ENCODE measurements at regions of chr11 and their contacts with region 1.

Region 1: DNA sequence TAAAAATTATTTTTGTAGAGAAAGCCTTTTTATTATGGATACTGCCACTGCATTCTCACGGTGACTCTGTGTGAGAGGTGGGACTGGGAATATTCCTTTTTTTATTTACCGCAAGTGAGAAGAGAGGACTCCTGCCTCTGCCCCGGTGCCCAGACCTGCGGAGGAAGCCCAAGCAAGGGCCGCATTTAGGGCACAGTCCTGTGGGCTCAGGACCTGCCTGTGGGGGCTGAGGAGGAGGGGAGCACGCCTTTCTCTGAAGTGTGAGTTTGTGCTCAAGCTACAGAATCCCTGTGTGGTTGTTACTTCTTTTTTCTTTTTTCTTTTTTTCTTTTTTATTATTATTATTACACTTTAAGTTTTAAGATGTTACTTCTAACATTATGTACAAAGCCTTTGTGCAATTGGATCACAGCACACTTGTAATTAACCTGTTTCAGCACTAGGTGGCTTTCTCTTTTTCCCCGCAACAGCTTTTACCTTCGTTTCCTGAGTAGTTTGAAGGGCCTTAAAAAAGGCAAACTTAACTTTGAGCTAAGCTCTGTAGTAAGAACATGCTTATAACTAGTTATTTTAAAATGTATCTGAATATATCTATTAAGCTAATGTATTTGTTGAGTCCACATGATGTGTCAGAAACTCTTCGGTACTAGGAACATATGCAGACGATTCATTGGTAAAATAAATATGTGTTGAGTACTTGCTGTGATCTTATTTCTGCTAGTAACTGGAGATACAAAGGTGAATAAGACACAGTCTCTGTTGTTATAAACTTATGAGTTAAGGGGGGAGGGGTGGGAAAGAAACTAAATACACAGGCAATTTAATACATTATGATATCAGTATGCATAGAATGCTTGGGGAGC is 18.3 kb downstream of the AMOTL1 start:
- DNase-seq: peak; percentile 51
- ATAC-seq: peak; percentile 84
- H3K4me3 Mint-ChIP-seq: no peak overlapping the region
- H3K27ac Mint-ChIP-seq: no peak overlapping the region
- H3K4me1 Mint-ChIP-seq: peaks cover 63% of the 10 kb centered on the region
- H3K27me3 Mint-ChIP-seq: no peaks in the 10 kb centered on the region
- CTCF ChIP-seq: peak; percentile 66

Region 2: GRCh38 chr11:94767761-94768601 is 18.5 kb before region 1 on chr11 and contains the start of gene AMOTL1:
- CTCF ChIA-PET with region 1: interaction called, 11 read pairs
- POLR2A ChIA-PET with region 1: no interaction called
- DNase-seq: peak; percentile 89
- ATAC-seq: peak; percentile 81
- H3K4me3 Mint-ChIP-seq: no peak within 1 kb of the TSS; the same call in 1 of the 2 replicates
- H3K27ac Mint-ChIP-seq: no peak within 1 kb of the TSS
- H3K4me1 Mint-ChIP-seq: peaks cover 46% of the 10 kb centered on the region
- H3K27me3 Mint-ChIP-seq: peaks cover 21% of the 10 kb centered on the region
- CTCF ChIP-seq: no peak
- total RNA-seq, gene AMOTL1: 23.4 to 39.8 TPM (median 26.4 TPM) in 3 replicates

Region 3: GRCh38 chr11:94854770-94855633 is 68.5 kb after region 1 on chr11:
- CTCF ChIA-PET with region 1: no interaction called
- POLR2A ChIA-PET with region 1: no interaction called
- DNase-seq: no peak
- ATAC-seq: no peak
- H3K4me3 Mint-ChIP-seq: no peak overlapping the region
- H3K27ac Mint-ChIP-seq: no peak overlapping the region
- H3K4me1 Mint-ChIP-seq: no peaks in the 10 kb centered on the region
- H3K27me3 Mint-ChIP-seq: no peaks in the 10 kb centered on the region
- CTCF ChIP-seq: no peak

Region 4: DNA sequence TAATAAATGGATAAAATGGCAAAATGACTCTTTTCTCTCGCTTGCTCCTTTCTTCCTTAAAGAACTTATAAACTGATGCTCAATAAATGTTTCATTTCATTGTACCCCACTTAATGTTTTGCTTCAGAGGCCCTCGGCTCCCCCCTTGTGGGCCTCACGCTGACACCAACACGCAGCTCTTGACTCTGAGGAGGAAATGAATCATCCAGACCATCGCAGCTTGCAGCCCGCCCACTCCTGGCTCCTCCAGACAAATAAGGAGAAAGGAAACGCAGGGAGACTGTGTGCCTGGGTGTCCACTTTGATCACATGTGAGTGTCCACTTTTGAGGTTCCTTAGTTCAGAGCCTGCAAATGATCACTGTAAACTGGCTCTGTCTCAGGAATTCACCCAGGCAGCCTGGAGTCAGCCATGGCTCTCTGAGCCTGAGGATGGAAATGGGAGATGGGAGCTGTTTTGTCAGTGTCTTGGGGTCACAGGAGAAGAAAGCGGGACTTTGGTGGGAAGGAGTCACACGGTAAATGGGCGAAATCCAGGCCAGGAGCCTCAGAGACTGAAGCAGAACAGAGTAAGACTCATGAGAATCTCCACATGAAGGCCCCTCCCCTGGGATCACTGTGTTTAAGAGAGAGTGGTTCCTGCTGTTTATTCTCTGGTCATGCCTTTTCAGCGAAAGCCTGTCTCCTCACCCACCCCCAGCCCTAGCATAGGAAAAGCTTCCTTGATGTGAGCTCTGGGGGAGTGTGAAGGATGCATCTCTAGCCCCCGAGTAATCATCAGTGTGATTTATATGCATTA is 90.3 kb after region 1 on chr11:
- CTCF ChIA-PET with region 1: no interaction called
- POLR2A ChIA-PET with region 1: no interaction called
- DNase-seq: no peak
- ATAC-seq: peak; percentile 24; the same call in 1 of the 2 replicates
- H3K4me3 Mint-ChIP-seq: no peak overlapping the region
- H3K27ac Mint-ChIP-seq: no peak overlapping the region; the same call in 1 of the 2 replicates
- H3K4me1 Mint-ChIP-seq: peaks cover 4% of the 10 kb centered on the region; the same call in 1 of the 2 replicates
- H3K27me3 Mint-ChIP-seq: no peaks in the 10 kb centered on the region
- CTCF ChIP-seq: no peak

Measured in WTC11 (cell line).